Naive thymus-derived CD4-positive, alpha-beta T cell (primary cell): ENCODE measurements at regions of chr3 and their contacts with region 1.

Region 1: DNA sequence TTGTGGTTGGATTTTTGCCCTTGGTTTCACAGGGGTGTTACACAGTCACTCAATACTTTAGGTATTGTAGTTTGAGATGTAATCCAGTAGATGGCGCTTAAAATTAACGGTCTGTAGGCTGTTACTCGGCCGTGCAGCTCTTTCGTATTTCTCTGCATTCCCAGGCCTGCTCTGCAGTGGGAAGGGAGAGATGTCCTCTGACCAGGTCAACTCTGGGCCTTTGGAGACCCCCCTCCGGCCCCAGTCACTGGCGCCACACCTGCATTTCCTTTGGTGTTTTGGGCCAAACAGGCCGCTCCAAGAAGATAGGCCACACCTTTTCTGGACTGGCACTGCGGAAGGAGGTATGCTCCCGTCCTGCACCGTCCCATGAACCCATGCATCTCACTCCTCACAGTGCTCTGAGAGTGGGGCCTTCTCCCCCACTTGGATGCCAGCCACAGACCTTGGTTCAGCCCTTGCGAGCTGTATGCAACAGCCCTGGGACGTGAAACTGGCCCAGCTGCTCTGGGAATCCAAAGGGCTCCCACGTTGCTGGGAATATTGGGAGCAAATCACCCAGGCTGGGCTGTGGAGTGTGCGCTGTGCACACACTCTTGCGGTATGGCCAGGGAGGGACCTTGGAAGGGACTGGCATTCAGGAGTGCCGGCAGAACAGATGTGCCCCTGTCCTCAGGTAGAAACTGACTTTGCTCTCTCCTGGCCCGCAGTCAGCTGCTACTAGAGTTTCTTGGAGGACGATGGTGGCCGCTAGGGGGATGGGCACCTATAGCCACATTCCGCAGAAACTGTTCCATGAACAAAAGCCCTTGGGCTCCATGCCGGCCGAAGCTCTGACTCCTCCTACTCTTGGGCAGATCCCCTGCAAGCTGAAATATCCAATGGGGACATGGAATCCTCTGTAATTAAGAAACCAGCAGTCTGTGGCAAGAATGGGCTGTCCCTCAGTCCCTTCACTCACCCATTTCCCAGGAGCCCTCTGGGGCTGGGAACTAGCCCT is 410.5 kb upstream of the CADM2 start:
- DNase-seq: no peak
- ATAC-seq: no peak
- H3K4me3 ChIP-seq: no peak overlapping the region
- H3K4me3 Mint-ChIP-seq: peak overlapping the region in 1 of 10 donors; percentile 17
- H3K27ac ChIP-seq: no peak overlapping the region
- H3K27ac Mint-ChIP-seq: no peak overlapping the region
- H3K4me1 ChIP-seq: no peaks in the 10 kb centered on the region
- H3K4me1 Mint-ChIP-seq: no peaks in the 10 kb centered on the region
- H3K27me3 ChIP-seq: no peaks in the 10 kb centered on the region
- H3K27me3 Mint-ChIP-seq: no peaks in the 10 kb centered on the region

Region 2: GRCh38 chr3:83426304-83426703 is 1122.0 kb before region 1 on chr3:
- CTCF ChIA-PET with region 1: no interaction called
- POLR2A ChIA-PET with region 1: no interaction called
- intact Hi-C with region 1: no loop called
- DNase-seq: no peak
- ATAC-seq: no peak
- H3K4me3 ChIP-seq: no peak overlapping the region
- H3K4me3 Mint-ChIP-seq: no peak overlapping the region
- H3K27ac ChIP-seq: no peak overlapping the region
- H3K27ac Mint-ChIP-seq: no peak overlapping the region
- H3K4me1 ChIP-seq: no peaks in the 10 kb centered on the region
- H3K4me1 Mint-ChIP-seq: no peaks in the 10 kb centered on the region
- H3K27me3 ChIP-seq: no peaks in the 10 kb centered on the region
- H3K27me3 Mint-ChIP-seq: no peaks in the 10 kb centered on the region

Region 3: DNA sequence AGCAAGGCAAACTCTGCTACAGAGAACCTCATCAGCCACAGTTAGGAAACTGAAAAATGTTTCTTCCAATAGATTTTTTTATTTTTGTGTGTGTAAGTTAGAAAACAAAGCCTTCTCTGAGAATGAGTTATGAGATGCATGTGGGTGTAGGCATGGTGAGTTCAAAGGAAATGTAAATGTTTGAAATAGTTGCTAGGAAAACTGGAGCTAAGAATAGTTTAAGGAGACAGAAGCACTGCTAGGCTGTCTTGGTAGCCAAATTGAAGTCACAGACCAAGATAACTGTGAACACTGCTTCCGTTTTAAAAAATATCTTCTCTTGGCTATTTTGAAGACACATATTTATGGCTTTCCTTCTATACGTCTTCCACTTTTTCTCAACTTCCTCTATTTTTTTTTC is 1090.7 kb before region 1 on chr3:
- CTCF ChIA-PET with region 1: no interaction called
- POLR2A ChIA-PET with region 1: no interaction called
- intact Hi-C with region 1: no loop called
- DNase-seq: no peak
- ATAC-seq: no peak
- H3K4me3 ChIP-seq: no peak overlapping the region
- H3K4me3 Mint-ChIP-seq: no peak overlapping the region
- H3K27ac ChIP-seq: no peak overlapping the region
- H3K27ac Mint-ChIP-seq: no peak overlapping the region
- H3K4me1 ChIP-seq: no peaks in the 10 kb centered on the region
- H3K4me1 Mint-ChIP-seq: no peaks in the 10 kb centered on the region
- H3K27me3 ChIP-seq: no peaks in the 10 kb centered on the region
- H3K27me3 Mint-ChIP-seq: no peaks in the 10 kb centered on the region

Region 4: DNA sequence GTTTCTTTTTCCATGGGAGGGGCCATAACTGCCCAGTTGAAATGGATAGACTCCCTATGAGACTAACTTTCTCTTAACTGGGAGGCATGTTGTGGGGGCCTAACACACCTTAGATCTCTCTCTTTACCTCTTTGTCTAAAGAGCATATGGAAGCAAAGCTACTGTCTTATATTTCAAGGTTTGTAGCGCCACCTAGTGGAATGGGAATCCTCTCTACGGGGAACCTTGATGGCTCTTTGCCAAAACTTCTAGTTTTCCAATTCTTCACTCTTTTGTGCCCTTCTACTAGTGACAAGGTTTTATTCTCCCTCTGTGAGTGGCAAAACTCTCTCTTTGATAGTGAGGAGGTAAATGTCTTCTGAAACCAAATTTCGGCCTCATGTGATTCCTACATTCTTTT is 619.9 kb before region 1 on chr3:
- CTCF ChIA-PET with region 1: no interaction called
- POLR2A ChIA-PET with region 1: no interaction called
- intact Hi-C with region 1: no loop called
- DNase-seq: no peak
- ATAC-seq: no peak
- H3K4me3 ChIP-seq: no peak overlapping the region
- H3K4me3 Mint-ChIP-seq: no peak overlapping the region
- H3K27ac ChIP-seq: no peak overlapping the region
- H3K27ac Mint-ChIP-seq: no peak overlapping the region
- H3K4me1 ChIP-seq: no peaks in the 10 kb centered on the region
- H3K4me1 Mint-ChIP-seq: no peaks in the 10 kb centered on the region
- H3K27me3 ChIP-seq: no peaks in the 10 kb centered on the region
- H3K27me3 Mint-ChIP-seq: no peaks in the 10 kb centered on the region

Region 5: GRCh38 chr3:85576091-85576690 is 1027.9 kb after region 1 on chr3:
- CTCF ChIA-PET with region 1: no interaction called
- POLR2A ChIA-PET with region 1: no interaction called
- intact Hi-C with region 1: loop called in 1 of 2 experiments (anchors 5 kb)
- DNase-seq: peak in 7 of 9 donors; percentile 4 to 33 (median 10)
- ATAC-seq: peak; percentile 51
- H3K4me3 ChIP-seq: no peak overlapping the region
- H3K4me3 Mint-ChIP-seq: no peak overlapping the region
- H3K27ac ChIP-seq: no peak overlapping the region
- H3K27ac Mint-ChIP-seq: no peak overlapping the region
- H3K4me1 ChIP-seq: no peaks in the 10 kb centered on the region
- H3K4me1 Mint-ChIP-seq: no peaks in the 10 kb centered on the region
- H3K27me3 ChIP-seq: no peaks in the 10 kb centered on the region
- H3K27me3 Mint-ChIP-seq: no peaks in the 10 kb centered on the region